Heart left ventricle (tissue), 16 donors: ENCODE measurements at regions of chr4 and their contacts with region 1.

Region 1: DNA sequence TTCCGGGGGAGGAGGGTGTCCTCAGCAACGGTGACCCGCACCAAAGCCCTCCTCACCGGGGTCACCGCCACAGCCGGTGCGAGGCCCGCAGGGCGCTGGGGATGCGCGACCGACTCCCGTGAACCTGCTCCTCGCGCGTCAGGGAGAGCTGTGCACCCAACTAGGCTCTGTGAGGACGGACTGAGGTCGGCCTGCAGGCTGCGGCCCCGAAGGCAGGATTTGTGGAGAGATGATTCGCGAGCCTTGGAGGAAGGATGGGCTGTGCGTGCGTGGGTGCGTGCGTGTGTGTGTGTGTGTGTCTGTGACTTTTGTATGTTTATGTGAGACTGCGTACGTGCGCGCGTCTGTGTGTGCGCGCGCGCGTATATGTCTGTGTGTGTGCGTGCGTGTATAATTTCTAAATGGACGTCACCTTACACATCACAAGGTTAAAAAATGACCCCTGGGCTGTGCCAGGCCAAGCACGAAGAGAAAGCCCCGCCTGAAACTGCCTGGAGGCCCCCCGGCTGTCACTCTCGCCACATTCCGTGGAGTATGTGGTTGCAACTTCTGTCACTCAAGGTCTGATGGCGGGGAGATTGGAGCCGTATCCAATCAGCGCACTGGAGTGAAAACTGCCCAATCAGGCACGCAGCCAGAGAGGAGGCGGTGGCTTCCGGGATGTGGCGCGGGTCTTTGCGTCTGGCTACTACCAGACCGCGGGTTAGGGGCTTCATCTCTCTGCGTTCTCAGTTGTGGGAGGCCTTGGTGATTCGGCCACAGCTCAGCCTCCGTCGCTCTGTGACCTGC is at the start of gene ZNF141:
- DNase-seq: peak; percentile 95 to 98 (median 98)
- ATAC-seq: peak; percentile 96 to 99 (median 96)
- H3K4me3 ChIP-seq: peak within 1 kb of the TSS; percentile 66 to 99 (median 93)
- H3K27ac ChIP-seq: peak within 1 kb of the TSS; percentile 93 to 99 (median 95)
- H3K4me1 ChIP-seq: peaks cover 0 to 30% (median 16%) of the 10 kb centered on the region in 12 donors
- H3K27me3 ChIP-seq: no peaks in the 10 kb centered on the region
- CTCF ChIP-seq: no peak
- POLR2A ChIP-seq: peak; percentile 70 to 79
- total RNA-seq, gene ZNF141: 3.3 to 12.5 (median 8.7) TPM

Region 2: GRCh38 chr4:473570-474457 is 136.5 kb after region 1 on chr4:
- intact Hi-C with region 1: loop called in 1 of 10 experiments (anchors 10 kb)
- DNase-seq: peak; percentile 95 to 97 (median 96)
- ATAC-seq: peak; percentile 99 to 100 (median 100)
- H3K4me3 ChIP-seq: peak overlapping the region; percentile 83 to 98 (median 94)
- H3K27ac ChIP-seq: peak overlapping the region; percentile 51 to 93 (median 90)
- H3K4me1 ChIP-seq: peaks cover 0 to 20% (median 10%) of the 10 kb centered on the region in 12 donors
- H3K27me3 ChIP-seq: no peaks in the 10 kb centered on the region
- CTCF ChIP-seq: peak in 1 of 12 donors; percentile 2
- POLR2A ChIP-seq: peak; percentile 22 to 77

Region 3: DNA sequence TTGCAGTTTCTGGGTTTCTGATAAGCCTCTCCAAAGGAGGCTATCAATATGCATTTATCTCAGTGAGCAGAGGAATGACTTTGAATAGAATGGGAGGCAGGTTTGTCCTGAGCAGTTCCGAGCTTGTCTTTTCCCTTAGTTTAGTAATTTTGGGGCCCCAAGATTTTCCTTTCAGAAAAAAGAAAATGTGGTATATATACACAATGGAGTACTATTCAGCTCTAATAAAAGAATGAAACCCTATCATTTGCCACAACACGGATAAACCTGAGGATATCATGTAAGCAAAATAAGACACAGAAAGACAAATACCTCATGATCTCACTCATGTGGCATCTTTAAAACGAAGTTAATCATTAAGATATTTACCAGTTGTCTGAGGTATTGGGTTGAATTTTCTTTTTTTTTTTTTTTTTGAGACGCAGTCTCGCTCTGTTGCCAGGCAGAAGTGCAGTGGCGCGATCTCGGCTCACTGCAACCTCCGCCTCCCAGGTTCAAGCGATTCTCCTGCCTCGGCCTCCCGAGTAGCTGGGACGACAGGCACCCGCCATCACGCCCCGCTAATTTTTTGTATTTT is 161.1 kb after region 1 on chr4:
- intact Hi-C with region 1: loop called in 2 of 10 experiments (anchors 1 to 5 kb)
- DNase-seq: no peak
- ATAC-seq: peak in 2 of 4 donors; percentile 14 to 29
- H3K4me3 ChIP-seq: peak overlapping the region; percentile 70 to 100 (median 85)
- H3K27ac ChIP-seq: peak overlapping the region; percentile 56 to 92 (median 88)
- H3K4me1 ChIP-seq: peaks cover 0 to 31% (median 16%) of the 10 kb centered on the region in 12 donors
- H3K27me3 ChIP-seq: no peaks in the 10 kb centered on the region
- CTCF ChIP-seq: no peak
- POLR2A ChIP-seq: no peak